Mammary epithelial cell (primary cell): ENCODE measurements at regions of chr19 and their contacts with region 1.

Region 1: GRCh38 chr19:13905938-13906904 is at the starts of genes BRME1 and CC2D1A:
- DNase-seq: peak; percentile 86
- H3K4me3 ChIP-seq: peak within 1 kb of the TSS; percentile 82 to 99 (median 91)
- H3K27ac ChIP-seq: no peak within 1 kb of the TSS
- H3K4me1 ChIP-seq: peaks cover 9% of the 10 kb centered on the region
- H3K27me3 ChIP-seq: no peaks in the 10 kb centered on the region
- CTCF ChIP-seq: no peak
- total RNA-seq, gene BRME1: 1.0 to 3.8 TPM
- total RNA-seq, gene CC2D1A: 31.7 to 58.8 TPM

Region 2: DNA sequence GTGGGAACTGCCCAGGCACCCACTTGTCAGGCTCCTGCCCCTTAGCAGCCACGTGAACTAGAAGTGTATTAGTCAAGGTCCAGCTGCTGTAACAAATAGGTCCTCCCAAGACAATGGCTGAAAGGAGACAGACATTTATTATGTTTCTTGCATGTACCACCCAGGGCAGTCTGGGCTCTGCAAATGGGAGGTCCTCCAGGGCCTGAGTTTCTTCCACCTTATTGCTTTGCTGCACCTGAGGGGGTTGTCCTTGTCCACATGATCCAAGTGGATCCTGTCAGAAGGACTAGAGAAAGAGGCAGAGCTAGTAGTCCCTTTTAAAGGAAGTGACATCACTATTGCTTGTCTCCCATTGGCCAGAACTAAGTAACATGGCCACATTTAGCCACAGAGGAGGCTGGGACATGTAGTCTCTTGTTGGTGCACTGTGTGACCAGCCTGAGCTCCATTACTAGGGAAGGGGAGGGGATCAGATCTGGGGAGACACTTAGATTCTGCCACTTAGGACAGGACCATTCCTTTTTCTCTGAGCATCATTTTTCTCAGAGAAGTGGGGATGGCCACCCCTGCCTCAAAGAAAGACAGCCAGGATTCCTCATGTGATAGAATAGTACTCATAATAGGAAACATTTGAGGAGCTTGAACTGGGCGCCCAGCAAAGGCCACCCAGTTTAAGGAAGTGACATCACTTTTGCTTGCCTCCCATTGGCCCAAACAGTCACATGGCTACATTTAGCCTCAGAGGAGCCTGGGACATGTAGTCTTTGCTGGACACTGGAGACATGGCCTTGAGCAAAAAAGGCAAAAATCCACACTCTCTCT is 14.9 kb after region 1 on chr19:
- CTCF ChIA-PET with region 1: no interaction called
- dilution Hi-C with region 1: no loop called
- in situ Hi-C with region 1: no loop called
- intact Hi-C with region 1: loop called (anchors 1 kb)
- DNase-seq: peak; percentile 51
- H3K4me3 ChIP-seq: no peak overlapping the region
- H3K27ac ChIP-seq: no peak overlapping the region
- H3K4me1 ChIP-seq: no peaks in the 10 kb centered on the region
- H3K27me3 ChIP-seq: no peaks in the 10 kb centered on the region
- CTCF ChIP-seq: no peak